ENCODE measurements at regions of chr6 and their contacts with region 1.

Region 1: GRCh38 chr6:151323791-151324487 is 67.4 kb downstream of the ZBTB2 start:
- DNase-seq: peak; percentile 84
- H3K4me3 Mint-ChIP-seq: peak overlapping the region; percentile 18
- H3K27ac Mint-ChIP-seq: no peak overlapping the region
- H3K4me1 Mint-ChIP-seq: peaks cover 18% of the 10 kb centered on the region
- H3K27me3 Mint-ChIP-seq: peaks cover 42% of the 10 kb centered on the region

Region 2: GRCh38 chr6:150891888-150892485 is 432.0 kb before region 1 on chr6:
- CTCF ChIA-PET with region 1: interaction called, 25 read pairs
- intact Hi-C with region 1: loop called (anchors 1 kb)
- DNase-seq: peak; percentile 71
- H3K4me3 Mint-ChIP-seq: no peak overlapping the region
- H3K27ac Mint-ChIP-seq: no peak overlapping the region
- H3K4me1 Mint-ChIP-seq: peaks cover 26% of the 10 kb centered on the region
- H3K27me3 Mint-ChIP-seq: no peaks in the 10 kb centered on the region

Region 3: GRCh38 chr6:151014404-151015100 is 309.4 kb before region 1 on chr6:
- CTCF ChIA-PET with region 1: interaction called, 98 read pairs
- intact Hi-C with region 1: loop called (anchors 1 kb)
- DNase-seq: peak; percentile 68
- H3K4me3 Mint-ChIP-seq: no peak overlapping the region
- H3K27ac Mint-ChIP-seq: no peak overlapping the region
- H3K4me1 Mint-ChIP-seq: no peaks in the 10 kb centered on the region
- H3K27me3 Mint-ChIP-seq: no peaks in the 10 kb centered on the region

Region 4: DNA sequence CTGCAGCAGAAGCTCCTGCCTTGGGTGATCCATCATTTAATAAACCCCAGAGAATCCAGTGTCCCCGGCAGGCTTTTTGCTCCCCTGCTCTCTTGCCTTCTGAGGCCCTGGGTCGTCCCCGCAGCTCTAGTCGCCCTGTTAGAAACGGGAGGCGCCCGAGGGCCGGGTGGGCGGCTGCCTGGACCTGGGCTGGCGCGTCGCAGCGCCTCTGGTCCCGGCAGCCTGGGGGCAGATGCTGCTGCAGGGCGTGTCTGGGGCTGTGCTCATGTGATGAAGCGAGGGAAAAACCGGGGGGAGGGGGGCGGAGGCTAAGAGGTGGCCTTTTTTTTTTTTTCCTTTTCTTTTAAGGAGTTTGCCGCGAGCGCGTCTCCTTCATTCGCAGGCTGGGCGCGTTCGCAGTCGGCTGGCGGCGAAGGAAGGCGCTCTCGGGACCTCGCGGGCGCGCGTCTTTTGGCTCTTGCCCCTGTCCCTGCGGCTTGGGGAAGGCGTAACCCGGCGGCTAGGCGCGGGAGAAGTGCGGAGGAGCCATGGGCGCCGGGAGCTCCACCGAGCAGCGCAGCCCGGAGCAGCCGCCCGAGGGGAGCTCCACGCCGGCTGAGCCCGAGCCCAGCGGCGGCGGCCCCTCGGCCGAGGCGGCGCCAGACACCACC is 83.8 kb before region 1 on chr6:
- CTCF ChIA-PET with region 1: interaction called, 6 read pairs
- intact Hi-C with region 1: loop called (anchors 1 kb)
- DNase-seq: peak; percentile 71
- H3K4me3 Mint-ChIP-seq: peak overlapping the region; percentile 83
- H3K27ac Mint-ChIP-seq: no peak overlapping the region
- H3K4me1 Mint-ChIP-seq: peaks cover 8% of the 10 kb centered on the region
- H3K27me3 Mint-ChIP-seq: peaks cover 60% of the 10 kb centered on the region

Region 5: GRCh38 chr6:151335930-151336329 is 12.0 kb after region 1 on chr6:
- CTCF ChIA-PET with region 1: interaction called, 37 read pairs
- intact Hi-C with region 1: no loop called
- DNase-seq: no peak
- H3K4me3 Mint-ChIP-seq: no peak overlapping the region
- H3K27ac Mint-ChIP-seq: no peak overlapping the region
- H3K4me1 Mint-ChIP-seq: peaks cover 3% of the 10 kb centered on the region
- H3K27me3 Mint-ChIP-seq: no peaks in the 10 kb centered on the region

Measured in activated naive CD4-positive, alpha-beta T cell treated with anti-CD3 and anti-CD28 coated beads for 36 hours (primary cell).